Sciatic nerve (tissue), 2 donors: ENCODE measurements at regions of chr3 and their contacts with region 1.

Region 1: GRCh38 chr3:98798820-98799219 is 35.7 kb downstream of the ST3GAL6 start:
- DNase-seq: no peak
- ATAC-seq: no peak

Region 2: DNA sequence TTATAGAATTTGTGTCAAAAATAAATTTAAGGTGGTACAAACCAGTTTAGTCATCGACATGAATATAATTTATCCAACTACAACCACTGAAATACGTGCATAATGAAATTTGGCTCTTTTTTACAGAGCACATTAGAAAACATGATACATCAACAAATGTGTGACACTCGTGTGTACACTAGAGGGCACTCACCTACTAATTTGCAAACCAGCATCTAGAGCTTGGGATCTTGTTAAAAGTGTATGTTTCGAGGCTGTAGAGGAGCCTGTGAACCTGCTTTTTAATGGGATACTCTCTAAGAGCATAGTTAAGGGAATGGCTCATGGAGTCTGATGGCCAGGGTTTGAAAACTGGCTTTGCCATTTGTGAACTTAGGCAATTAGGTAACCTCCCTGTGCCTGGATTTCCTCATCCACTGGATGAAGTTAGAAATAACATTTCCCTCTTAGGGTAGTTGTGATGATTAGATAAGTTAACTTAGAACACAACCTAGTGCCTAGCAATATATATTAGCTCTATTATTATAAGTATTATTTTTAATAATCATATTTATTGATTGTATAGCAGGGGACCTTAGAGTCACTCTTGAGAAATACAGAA is 196.6 kb before region 1 on chr3:
- intact Hi-C with region 1: loop called (anchors 5 kb)
- DNase-seq: no peak
- ATAC-seq: peak; percentile 88